ENCODE measurements at regions of chr4 and their contacts with region 1.

Region 1: DNA sequence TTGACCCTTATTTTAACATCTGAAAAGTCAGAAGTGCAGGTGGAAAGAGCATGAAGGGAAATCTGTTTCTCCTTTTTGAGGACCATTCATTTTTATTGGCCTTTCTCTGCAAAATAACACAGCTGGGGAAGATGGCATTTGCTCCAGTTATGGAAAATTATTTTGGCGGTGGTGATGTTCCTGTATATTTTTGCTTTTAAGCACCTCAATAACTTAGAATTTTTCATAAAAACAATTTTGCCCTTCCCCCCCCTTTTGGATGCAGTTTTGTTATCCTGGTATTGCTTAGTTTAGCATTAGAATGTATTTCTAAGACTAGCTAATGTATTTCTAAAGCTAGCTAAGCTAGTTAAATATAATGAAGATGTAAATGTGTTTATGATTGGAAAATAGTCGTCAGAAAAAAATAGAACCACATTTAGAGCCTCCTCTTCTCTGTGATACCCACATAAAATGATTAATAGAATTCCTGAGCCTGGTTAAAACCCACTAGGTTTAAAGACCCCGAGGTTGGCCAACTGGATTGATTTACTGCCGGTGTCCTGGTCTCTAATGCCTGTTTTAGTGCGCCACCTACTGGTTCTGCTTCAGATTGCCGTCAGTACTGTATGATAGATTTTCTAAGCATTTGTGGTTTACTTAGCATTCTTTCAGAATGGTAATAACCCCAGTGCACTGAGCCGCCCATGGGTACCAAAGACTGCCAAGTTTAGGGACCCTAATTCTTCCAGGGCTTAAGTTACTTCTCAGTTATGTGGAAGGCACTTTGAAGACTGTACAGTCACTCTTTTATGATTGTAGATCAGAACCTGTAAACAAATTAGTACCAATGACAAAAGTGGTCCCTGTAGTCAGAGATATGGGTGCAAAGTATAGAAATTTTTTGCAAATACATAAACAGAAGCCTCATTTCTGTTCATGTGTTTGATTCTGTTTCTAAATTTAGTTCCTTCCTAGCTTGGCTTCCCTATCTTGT is 11.4 kb downstream of the KLF3 start:
- DNase-seq: peak; percentile 70
- CTCF ChIP-seq: peak; percentile 77

Region 2: DNA sequence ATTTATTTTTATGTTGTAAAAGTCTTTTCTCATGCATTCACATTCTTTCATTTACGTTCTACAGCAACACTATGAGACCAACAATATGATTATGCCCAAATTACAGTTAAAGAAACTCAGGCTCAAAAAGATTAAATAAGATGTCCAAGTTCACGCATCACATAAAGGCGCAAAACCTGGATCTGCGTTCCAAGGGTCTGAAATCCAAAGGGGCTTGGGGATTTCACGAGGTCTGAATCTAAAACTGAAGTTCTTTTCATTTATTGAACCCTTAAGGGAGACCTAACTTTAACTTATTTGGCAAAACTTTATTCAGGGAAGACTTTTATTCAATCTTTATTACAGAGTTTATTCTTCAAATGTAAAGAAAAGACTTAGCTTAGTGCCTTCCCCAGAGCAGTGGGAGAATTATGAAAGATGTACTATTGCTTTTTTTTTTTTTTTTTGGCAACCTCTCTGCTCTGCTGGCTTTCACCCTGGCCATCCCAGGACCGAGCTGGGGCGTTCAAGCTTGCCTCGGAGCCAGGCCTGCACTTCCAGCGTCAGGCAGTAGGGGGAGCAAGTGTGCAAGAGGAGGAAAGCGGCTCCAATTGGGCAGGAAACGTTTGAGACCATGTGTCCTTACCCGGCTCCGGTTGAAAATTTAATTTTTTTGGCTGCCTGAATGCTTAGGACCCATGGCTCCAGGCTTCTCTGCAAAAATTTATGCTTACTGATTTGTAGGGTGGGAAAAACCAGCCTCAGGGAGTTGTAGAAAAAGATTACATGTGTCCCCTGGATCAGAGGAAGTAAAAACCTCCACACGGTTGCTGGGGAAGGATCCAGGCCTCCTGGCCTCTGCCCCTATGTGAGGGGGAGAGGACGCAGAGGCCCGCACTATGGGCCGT is 355.7 kb before region 1 on chr4:
- in situ Hi-C with region 1: loop called (anchors 5 kb)
- DNase-seq: peak; percentile 84
- CTCF ChIP-seq: peak; percentile 99

Region 3: GRCh38 chr4:39037491-39037825 is 362.0 kb after region 1 on chr4:
- in situ Hi-C with region 1: no loop called
- DNase-seq: no peak
- CTCF ChIP-seq: no peak

Region 4: GRCh38 chr4:39103291-39103690 is 427.9 kb after region 1 on chr4:
- in situ Hi-C with region 1: no loop called
- DNase-seq: no peak
- CTCF ChIP-seq: no peak

Measured in GM13976 (cell line).